ENCODE measurements at regions of chr10 and their contacts with region 1.

Region 1: DNA sequence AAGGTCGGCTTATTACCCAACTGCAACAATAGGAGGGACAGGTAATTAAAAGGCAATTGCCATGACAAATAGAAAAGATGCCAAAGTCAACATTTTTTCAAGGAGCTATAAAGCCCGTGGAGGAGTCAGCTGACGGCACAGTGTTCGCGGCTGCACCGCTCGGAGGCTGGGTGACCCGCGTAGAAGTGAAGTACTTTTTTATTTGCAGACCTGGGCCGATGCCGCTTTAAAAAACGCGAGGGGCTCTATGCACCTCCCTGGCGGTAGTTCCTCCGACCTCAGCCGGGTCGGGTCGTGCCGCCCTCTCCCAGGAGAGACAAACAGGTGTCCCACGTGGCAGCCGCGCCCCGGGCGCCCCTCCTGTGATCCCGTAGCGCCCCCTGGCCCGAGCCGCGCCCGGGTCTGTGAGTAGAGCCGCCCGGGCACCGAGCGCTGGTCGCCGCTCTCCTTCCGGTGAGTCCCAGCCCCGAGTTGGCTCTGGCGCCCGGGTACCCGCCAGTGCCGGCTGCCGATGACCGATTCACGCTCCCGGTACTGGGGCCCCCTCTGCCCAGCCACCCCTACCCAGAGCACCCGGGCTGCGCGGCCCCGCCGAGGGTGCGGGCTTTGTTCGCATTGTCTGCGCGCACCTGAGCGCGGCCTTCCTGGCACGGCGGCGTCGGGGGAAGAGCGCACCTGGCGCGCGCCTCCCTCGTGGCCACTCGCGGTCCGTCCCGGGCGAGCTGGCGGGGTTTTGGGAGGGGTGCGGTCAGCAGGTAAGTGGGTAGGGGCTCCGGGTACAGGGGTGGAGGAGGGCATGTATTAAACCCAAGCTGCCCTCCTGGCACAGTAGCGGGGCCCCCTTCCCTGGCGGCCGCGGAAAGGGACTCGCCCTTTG is at the start of gene VWA2:
- DNase-seq: peak; percentile 24
- ATAC-seq: peak; percentile 49
- H3K4me3 Mint-ChIP-seq: peak within 1 kb of the TSS; percentile 50
- H3K27ac Mint-ChIP-seq: no peak within 1 kb of the TSS
- H3K4me1 Mint-ChIP-seq: peaks cover 8% of the 10 kb centered on the region
- H3K27me3 Mint-ChIP-seq: peaks cover 53% of the 10 kb centered on the region
- CTCF ChIP-seq: no peak
- total RNA-seq, gene VWA2: not detected in 2 replicates

Region 2: DNA sequence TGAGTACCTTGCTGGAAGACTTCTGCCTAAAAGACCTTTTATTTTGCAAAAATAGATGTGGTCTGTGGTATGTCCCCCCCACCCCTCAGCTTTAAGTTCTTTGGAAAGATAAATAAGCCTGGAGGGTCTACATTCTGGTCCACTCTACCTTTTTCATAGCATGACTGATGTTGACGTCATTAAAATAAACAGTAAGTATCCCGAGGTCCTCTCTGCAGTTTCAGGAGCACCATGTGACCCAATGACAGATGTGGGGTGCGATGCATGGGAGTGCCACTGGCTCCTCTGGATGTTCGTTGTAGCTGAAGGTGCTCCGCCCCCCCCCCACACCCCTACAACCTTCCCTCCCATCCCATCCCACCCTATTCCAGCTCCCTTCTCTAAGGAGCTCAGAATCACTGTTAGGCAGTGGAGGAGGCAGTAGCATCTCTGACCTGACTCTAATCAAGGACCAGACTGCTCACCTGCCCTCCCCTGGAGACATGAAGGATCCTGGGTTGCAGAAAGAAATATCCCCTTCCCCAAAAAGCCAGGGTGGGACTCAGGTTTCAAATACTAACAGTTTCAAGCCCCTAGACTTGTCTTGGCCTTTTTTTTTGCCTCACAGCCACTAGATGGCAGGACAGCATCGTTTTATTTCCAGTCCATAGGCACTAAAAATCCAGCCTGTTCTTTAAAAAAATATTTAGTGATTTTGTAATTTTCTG is 534.6 kb before region 1 on chr10:
- CTCF ChIA-PET with region 1: no interaction called
- POLR2A ChIA-PET with region 1: no interaction called
- intact Hi-C with region 1: loop called (anchors 1 kb)
- DNase-seq: no peak
- ATAC-seq: no peak
- H3K4me3 Mint-ChIP-seq: no peak overlapping the region
- H3K27ac Mint-ChIP-seq: no peak overlapping the region
- H3K4me1 Mint-ChIP-seq: peaks cover 13% of the 10 kb centered on the region
- H3K27me3 Mint-ChIP-seq: no peaks in the 10 kb centered on the region
- CTCF ChIP-seq: no peak

Region 3: GRCh38 chr10:113802997-113803396 is 436.4 kb before region 1 on chr10:
- CTCF ChIA-PET with region 1: no interaction called
- POLR2A ChIA-PET with region 1: no interaction called
- intact Hi-C with region 1: loop called (anchors 1 kb)
- DNase-seq: no peak
- ATAC-seq: no peak
- H3K4me3 Mint-ChIP-seq: no peak overlapping the region
- H3K27ac Mint-ChIP-seq: no peak overlapping the region
- H3K4me1 Mint-ChIP-seq: peaks cover 7% of the 10 kb centered on the region
- H3K27me3 Mint-ChIP-seq: peaks cover 3% of the 10 kb centered on the region
- CTCF ChIP-seq: no peak

Region 4: DNA sequence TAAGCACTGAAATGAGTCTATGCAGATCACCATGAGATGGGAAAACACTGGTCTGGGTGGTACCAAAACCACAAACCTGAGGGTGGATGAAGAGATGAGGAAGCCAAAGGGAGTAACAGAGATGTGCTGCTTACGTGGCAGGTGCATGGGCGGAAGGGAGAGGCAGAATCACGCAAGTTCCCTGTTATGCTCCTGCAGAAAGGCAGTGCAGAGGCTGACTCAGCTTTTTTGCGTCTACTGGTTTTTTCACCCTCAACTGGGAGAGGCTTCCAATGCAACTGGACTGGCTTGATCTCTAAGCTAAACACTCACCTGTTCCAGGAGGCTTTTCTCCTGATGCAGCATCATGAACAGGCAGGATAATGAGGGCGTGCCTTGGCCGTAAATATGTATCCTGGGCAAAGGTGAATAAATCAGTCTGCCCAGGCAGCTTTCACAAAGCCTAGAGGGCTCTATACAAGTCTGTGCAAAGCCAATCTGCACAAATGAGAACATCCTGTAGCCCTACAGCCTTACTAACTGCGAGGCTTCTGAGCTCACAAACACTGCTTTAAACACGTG is 260.4 kb after region 1 on chr10:
- CTCF ChIA-PET with region 1: no interaction called
- POLR2A ChIA-PET with region 1: no interaction called
- intact Hi-C with region 1: no loop called
- DNase-seq: peak; percentile 37
- ATAC-seq: peak; percentile 49
- H3K4me3 Mint-ChIP-seq: peak overlapping the region; percentile 67
- H3K27ac Mint-ChIP-seq: peak overlapping the region; percentile 96
- H3K4me1 Mint-ChIP-seq: peaks cover 83% of the 10 kb centered on the region
- H3K27me3 Mint-ChIP-seq: no peaks in the 10 kb centered on the region
- CTCF ChIP-seq: no peak